Heart left ventricle (tissue), 16 donors: ENCODE measurements at regions of chr3 and their contacts with region 1.

Region 1: DNA sequence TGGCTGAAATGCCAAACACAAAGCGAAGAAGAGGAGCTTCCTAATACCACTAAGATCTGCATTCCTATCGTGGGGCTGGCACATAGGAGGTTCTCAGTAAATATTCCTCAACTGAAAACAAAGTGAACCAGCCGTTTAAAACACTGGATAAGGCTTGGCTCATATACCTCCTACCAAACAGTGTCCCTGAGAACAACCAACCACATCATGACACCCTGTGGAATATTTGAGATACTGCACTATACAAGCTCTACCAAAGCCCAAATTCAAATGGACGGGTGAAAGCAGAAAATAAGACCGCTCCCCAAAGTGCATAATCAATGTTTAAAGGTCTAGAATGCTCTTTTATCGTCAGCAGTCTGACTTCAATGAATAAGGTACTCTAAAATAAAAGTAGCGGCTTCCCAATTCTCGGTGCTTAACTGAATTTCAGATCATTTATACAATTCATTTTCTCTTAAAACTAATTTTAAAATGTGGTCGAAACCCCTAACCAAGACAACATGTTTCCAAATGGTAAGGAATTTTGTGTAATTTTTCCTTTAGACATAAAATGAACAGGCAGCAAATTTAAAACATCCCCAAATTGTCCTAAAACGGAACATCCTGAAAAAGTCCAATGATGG is 425.8 kb downstream of the ERC2 start:
- DNase-seq: no peak
- ATAC-seq: peak; percentile 51 to 80 (median 74)
- H3K4me3 ChIP-seq: no peak overlapping the region
- H3K27ac ChIP-seq: no peak overlapping the region
- H3K4me1 ChIP-seq: no peaks in the 10 kb centered on the region
- H3K27me3 ChIP-seq: peaks cover 0 to 31% (median 0%) of the 10 kb centered on the region in 9 donors
- CTCF ChIP-seq: peak in 11 of 12 donors; percentile 34 to 58 (median 52)
- POLR2A ChIP-seq: no peak

Region 2: DNA sequence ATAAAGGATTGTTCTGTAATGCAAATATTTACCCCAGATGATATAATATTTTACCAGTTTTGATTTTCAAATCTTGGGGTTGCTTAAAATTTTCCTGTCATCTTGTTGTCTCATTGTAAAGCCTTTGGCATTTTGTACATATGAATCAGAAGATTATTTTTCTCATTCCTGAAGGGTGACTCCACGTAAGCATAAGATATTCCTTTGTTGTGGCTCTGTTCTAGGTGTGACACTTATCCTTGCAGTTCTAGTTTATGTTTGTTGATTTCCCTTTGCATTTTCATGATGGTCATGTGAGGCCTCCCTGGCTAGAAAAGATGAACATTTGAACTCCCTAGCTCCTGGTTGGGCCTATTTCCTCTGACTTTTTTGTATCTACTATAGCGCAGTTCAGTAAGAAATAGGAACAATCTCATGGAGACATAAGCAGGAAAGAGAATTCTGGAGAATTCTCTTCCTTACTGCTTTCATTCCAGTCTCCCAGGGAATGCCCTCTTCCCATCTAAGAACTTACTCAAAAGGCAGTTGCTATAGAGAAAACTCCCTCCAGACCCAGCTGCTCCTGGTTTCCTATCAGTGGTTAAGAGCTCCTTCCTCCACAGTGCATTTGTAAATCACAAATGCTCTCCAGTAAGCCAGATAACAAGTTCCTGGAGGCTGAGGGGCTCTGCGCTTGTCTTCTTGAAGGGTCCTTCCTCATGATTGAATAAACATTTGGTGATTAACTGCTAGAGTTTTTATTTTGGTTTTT is 680.1 kb before region 1 on chr3:
- intact Hi-C with region 1: no loop called
- DNase-seq: no peak
- ATAC-seq: no peak
- H3K4me3 ChIP-seq: no peak overlapping the region
- H3K27ac ChIP-seq: no peak overlapping the region
- H3K4me1 ChIP-seq: no peaks in the 10 kb centered on the region
- H3K27me3 ChIP-seq: no peaks in the 10 kb centered on the region
- CTCF ChIP-seq: no peak
- POLR2A ChIP-seq: no peak

Region 3: DNA sequence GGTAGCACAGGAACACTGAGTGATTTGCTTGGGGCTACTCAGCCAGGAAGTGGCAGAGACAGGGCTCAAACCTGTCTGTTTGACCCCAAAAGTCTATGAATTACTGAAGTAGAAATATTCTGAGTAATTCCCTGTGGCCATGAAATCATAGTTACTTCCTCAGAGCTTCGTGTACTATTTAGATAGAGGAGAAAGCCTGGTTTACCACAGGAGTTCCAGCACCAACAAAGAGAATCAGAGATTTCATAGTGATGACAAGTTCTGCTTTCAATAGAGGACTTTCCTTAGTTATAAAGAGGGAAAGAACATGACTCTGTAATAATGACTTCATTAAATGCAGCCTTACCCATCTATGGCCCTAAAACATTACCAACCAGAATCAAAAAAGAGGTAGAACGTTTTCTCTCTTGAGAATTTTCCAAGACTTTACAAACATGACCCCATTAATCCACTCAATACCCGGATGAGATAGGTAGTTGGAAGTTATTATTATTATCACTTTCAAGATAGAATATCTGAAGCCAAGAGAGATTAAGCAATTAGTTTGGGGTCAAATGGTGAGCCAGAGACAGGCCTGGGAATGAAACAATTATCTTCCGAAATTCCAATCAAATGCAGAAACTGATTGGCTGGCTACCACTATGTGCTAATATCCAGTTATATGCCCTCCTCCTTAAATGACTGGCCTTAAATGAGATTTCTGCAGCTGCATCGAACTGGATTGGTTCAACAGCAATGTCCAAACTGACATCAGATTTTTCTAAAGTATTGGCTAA is 541.7 kb before region 1 on chr3:
- intact Hi-C with region 1: loop called in 1 of 10 experiments (anchors 10 kb)
- DNase-seq: no peak
- ATAC-seq: no peak
- H3K4me3 ChIP-seq: no peak overlapping the region
- H3K27ac ChIP-seq: no peak overlapping the region
- H3K4me1 ChIP-seq: no peaks in the 10 kb centered on the region
- H3K27me3 ChIP-seq: peaks cover 0 to 5% (median 0%) of the 10 kb centered on the region in 9 donors
- CTCF ChIP-seq: no peak
- POLR2A ChIP-seq: no peak

Region 4: GRCh38 chr3:55746808-55747413 is 295.5 kb before region 1 on chr3:
- intact Hi-C with region 1: loop called in 1 of 10 experiments (anchors 5 kb)
- DNase-seq: no peak
- ATAC-seq: no peak
- H3K4me3 ChIP-seq: no peak overlapping the region
- H3K27ac ChIP-seq: no peak overlapping the region
- H3K4me1 ChIP-seq: no peaks in the 10 kb centered on the region
- H3K27me3 ChIP-seq: peaks cover 0 to 11% (median 0%) of the 10 kb centered on the region in 9 donors
- CTCF ChIP-seq: peak; percentile 14 to 50 (median 34)
- POLR2A ChIP-seq: no peak